ENCODE measurements at regions of chr1 and their contacts with region 1.

Region 1: DNA sequence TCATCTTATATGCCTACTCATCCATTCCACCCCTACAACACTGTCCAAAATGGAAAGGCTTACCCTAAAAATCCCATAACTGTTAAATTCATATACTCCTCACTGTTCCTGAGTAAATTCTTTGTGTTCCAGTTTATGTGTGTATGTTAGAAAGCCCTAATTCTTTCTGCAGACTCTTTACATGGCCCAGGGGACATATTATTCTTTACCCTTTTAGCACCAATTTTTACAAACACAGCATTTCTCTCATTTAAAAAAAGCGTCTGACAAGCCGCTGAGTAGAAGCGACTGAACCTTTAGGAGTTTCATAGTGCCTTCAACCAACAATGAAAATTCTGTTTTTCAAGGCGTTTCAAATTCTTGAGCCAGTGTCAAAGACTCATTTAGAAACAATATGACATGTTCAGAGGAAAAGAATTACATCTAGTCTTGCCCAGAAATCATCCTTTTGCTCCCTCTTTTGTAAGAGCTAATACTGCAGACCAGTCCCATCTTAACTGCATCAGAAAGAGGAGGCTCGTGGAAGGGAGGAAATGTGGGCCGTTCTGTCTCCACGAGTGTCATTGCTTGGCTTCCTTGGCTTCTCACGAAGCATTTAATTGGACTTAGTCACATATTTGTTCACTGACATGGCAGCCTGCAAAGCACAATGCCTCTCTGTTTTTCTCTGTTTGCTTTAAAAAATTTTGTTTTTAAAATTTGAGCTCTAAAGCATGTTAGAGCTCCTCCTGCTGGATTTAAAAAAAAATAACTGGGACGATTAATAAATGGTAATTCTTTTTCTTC is 21.3 kb upstream of the C1orf105 start:
- DNase-seq: peak in 1 of 2 donors; percentile 87
- H3K4me3 ChIP-seq: peak overlapping the region; percentile 27 to 44
- H3K27ac ChIP-seq: peak overlapping the region; percentile 79 to 87
- H3K4me1 ChIP-seq: peaks cover 3 to 48% of the 10 kb centered on the region in 2 donors
- H3K27me3 ChIP-seq: no peaks in the 10 kb centered on the region
- CTCF ChIP-seq: peak; percentile 57 to 74 (median 63)

Region 2: DNA sequence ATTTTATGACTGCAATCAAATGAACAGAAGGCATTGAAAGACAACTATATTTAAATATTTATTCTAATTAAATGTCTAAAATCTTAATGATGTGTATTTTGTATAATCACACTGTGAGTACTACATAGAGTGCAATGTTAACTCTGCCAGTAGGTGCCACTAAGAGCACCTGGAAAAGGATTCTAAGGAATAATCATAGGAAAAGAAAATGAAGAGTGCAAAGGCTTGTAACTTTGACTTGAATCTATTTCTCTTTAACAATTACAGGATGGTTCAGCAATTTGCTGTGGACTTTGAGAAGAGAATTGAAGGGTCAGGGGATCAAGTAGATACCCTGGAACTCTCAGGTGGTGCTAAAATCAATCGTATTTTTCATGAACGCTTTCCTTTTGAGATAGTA is 357.4 kb before region 1 on chr1:
- intact Hi-C with region 1: loop called (anchors 2 kb)
- DNase-seq: no peak
- H3K4me3 ChIP-seq: peak overlapping the region in 1 of 2 donors; percentile 13
- H3K27ac ChIP-seq: no peak overlapping the region
- H3K4me1 ChIP-seq: no peaks in the 10 kb centered on the region
- H3K27me3 ChIP-seq: no peaks in the 10 kb centered on the region
- CTCF ChIP-seq: peak in 2 of 3 experiments; percentile 38 to 58

Region 3: GRCh38 chr1:172135076-172135672 is 264.0 kb before region 1 on chr1:
- intact Hi-C with region 1: loop called (anchors 1 kb)
- DNase-seq: no peak
- H3K4me3 ChIP-seq: no peak overlapping the region
- H3K27ac ChIP-seq: peak overlapping the region; percentile 92 to 95
- H3K4me1 ChIP-seq: no peaks in the 10 kb centered on the region
- H3K27me3 ChIP-seq: no peaks in the 10 kb centered on the region
- CTCF ChIP-seq: peak; percentile 25 to 45 (median 26)

Region 4: DNA sequence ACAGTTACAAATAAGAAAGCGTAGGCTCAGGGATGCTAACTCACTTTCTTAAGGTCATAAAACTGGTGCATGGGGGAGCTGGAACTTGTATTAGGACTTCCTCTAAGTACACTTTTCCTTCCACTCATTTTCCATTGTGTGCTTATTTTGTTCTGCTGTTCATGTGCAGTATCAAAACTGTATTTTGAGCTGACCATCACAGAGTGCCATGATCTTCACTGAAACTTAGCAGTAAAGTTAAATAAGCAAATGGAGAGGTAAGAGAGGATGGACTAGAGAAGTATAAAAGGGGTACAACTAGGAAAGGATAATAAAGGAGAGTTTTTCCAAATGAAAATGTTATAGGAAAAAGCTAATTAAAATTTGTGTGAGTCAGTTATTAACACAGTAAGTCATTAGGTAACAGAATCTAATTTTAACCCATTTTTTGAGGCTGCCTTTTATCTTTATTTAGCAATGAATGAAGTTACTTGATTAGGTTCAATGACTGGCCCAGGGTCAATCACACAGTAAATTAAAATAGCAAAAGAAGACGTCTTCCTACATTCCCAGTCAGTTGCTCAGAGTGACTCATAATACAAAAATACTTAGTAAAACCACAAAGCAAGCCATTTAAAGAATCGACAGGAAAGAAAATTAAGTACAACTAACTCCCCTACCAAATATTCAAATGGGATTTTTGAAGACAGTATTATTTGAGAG is 144.5 kb before region 1 on chr1:
- intact Hi-C with region 1: loop called (anchors 5 kb)
- DNase-seq: no peak
- H3K4me3 ChIP-seq: no peak overlapping the region
- H3K27ac ChIP-seq: peak overlapping the region in 1 of 2 donors; percentile 62
- H3K4me1 ChIP-seq: peaks cover 0 to 11% of the 10 kb centered on the region in 2 donors
- H3K27me3 ChIP-seq: no peaks in the 10 kb centered on the region
- CTCF ChIP-seq: no peak

Region 5: GRCh38 chr1:172322219-172323061 is 76.7 kb before region 1 on chr1:
- intact Hi-C with region 1: loop called (anchors 1 kb)
- DNase-seq: peak; percentile 35 to 87
- H3K4me3 ChIP-seq: peak overlapping the region; percentile 5 to 52
- H3K27ac ChIP-seq: peak overlapping the region; percentile 91 to 92
- H3K4me1 ChIP-seq: peaks cover 0 to 23% of the 10 kb centered on the region in 2 donors
- H3K27me3 ChIP-seq: no peaks in the 10 kb centered on the region
- CTCF ChIP-seq: peak in 1 of 3 experiments; percentile 15

Region 6: DNA sequence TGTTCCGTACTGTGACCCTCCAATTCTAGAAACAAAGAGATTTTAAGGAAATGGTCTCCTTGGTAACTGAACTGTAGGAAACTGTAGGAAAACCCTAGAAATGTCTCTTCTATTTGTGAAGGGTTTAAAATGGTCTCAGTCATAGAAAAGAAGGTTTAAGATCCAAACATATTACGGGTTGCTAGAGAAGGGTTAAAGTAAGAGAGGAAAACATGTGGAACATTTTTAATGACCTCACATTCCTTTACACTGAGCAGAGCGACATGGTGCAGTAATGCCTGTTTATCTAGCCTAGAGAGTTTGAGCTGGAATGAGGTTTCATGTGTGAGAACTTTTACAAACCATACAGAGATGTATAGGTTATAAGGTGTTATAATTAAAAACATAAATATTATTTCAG is 15.6 kb before region 1 on chr1:
- intact Hi-C with region 1: loop called (anchors 1 kb)
- DNase-seq: no peak
- H3K4me3 ChIP-seq: peak overlapping the region in 1 of 2 donors; percentile 44
- H3K27ac ChIP-seq: peak overlapping the region; percentile 60 to 63
- H3K4me1 ChIP-seq: peaks cover 0 to 16% of the 10 kb centered on the region in 2 donors
- H3K27me3 ChIP-seq: no peaks in the 10 kb centered on the region
- CTCF ChIP-seq: no peak

Region 7: GRCh38 chr1:172532700-172533509 is 133.7 kb after region 1 on chr1 and contains the start of gene SUCO:
- intact Hi-C with region 1: loop called (anchors 5 kb)
- DNase-seq: peak; percentile 100
- H3K4me3 ChIP-seq: peak within 1 kb of the TSS; percentile 80 to 83
- H3K27ac ChIP-seq: peak within 1 kb of the TSS; percentile 95 to 98
- H3K4me1 ChIP-seq: peaks cover 4 to 10% of the 10 kb centered on the region in 2 donors
- H3K27me3 ChIP-seq: no peaks in the 10 kb centered on the region
- CTCF ChIP-seq: peak in 1 of 3 experiments; percentile 5
- total RNA-seq, gene SUCO: 7.8 TPM

Measured in ascending aorta (tissue), 2 donors.